ENCODE measurements at regions of chr10 and their contacts with region 1.

Region 1: DNA sequence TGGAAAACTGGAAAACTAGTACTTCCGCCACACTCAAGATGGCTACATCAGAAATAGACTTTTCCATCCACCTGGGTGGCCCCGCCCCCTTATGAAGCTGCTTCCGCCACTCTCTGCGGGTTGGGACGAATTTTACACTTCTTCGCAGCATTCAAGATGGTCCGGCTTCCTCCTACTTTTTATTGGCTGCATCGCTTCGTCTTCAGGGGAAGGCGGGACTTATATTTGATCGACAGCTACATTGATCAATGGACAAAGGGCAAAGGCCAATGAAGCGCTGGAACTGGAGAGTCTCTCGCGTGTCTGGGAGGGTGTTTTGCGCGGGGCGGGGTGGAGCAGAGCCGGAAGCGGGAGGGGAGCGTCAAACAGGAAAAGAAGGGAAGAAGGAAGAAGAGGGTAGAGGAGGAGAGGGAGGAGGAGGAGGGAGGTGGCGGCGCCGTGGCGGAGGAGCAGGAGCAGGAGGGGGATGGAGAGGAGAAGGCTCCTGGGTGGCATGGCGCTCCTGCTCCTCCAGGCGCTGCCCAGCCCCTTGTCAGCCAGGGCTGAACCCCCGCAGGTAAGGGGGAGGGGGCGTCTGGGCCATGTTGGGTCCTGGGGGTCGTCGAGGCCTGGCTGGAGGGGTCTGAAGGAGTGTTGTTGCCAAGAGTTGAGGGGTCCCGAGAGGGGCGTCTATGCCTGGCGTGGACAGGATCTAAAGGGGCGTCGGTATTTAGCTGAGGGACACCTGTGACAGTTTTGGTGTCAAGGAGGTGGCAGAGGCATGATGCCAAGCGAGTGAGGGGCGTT is at the start of gene WBP1L:
- DNase-seq: peak; percentile 88 to 99 (median 94)
- ATAC-seq: peak; percentile 97
- H3K4me3 ChIP-seq: peak within 1 kb of the TSS; percentile 99
- H3K4me3 Mint-ChIP-seq: peak within 1 kb of the TSS; percentile 94
- H3K27ac ChIP-seq: peak within 1 kb of the TSS; percentile 73 to 78
- H3K27ac Mint-ChIP-seq: peak within 1 kb of the TSS; percentile 86
- H3K4me1 ChIP-seq: peaks cover 27% of the 10 kb centered on the region
- H3K4me1 Mint-ChIP-seq: peaks cover 51% of the 10 kb centered on the region
- H3K27me3 ChIP-seq: no peaks in the 10 kb centered on the region
- H3K27me3 Mint-ChIP-seq: no peaks in the 10 kb centered on the region
- CTCF ChIP-seq: no peak
- total RNA-seq, gene WBP1L: 6.1 to 6.5 TPM

Region 2: GRCh38 chr10:101818119-101818871 is 925.5 kb before region 1 on chr10 and contains the start of gene OGA:
- CTCF ChIA-PET with region 1: no interaction called
- POLR2A ChIA-PET with region 1: no interaction called
- intact Hi-C with region 1: loop called in 1 of 2 experiments (anchors 10 kb)
- DNase-seq: peak; percentile 92 to 100 (median 98)
- ATAC-seq: peak; percentile 87
- H3K4me3 ChIP-seq: peak within 1 kb of the TSS; percentile 97
- H3K4me3 Mint-ChIP-seq: peak within 1 kb of the TSS; percentile 99
- H3K27ac ChIP-seq: peak within 1 kb of the TSS; percentile 82 to 87
- H3K27ac Mint-ChIP-seq: peak within 1 kb of the TSS; percentile 96
- H3K4me1 ChIP-seq: peaks cover 29% of the 10 kb centered on the region
- H3K4me1 Mint-ChIP-seq: peaks cover 48% of the 10 kb centered on the region
- H3K27me3 ChIP-seq: no peaks in the 10 kb centered on the region
- H3K27me3 Mint-ChIP-seq: no peaks in the 10 kb centered on the region
- CTCF ChIP-seq: no peak
- total RNA-seq, gene OGA: 395 to 416 TPM

Region 3: DNA sequence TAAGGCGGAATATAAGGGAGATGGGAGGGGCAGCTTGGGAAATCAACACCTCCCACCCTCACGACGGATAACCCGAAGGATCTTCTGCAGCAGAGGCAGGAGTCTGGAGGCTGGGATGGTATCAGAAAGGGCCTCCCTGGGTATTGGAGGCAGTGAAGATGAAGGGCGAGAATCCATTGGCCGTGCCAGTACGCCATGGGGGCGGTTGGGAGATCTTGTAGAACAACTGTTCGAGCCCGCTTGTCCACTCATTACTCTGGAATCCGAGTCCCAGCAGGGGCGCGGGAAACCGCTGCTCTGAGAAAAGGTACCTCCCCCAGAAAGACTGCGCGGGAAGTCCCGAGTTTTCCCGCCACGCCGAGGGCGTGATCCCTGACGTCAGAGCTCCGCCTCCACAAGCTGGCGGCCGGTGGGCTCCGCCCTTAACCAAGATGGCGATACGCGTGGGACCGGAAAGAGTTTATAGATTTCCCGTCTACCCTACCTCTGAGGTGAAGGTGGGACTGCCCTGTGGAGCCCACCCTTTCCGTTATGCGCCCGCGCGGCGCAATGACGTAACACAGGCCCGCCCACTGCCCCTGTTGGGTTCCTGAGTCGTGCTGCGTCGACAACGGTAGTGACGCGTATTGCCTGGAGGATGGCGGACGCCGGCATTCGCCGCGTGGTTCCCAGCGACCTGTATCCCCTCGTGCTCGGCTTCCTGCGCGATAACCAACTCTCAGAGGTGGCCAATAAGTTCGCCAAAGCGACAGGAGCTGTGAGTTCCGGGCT is 591.8 kb before region 1 on chr10 and contains the start of gene NOLC1:
- CTCF ChIA-PET with region 1: no interaction called
- POLR2A ChIA-PET with region 1: interaction called, 3 read pairs
- intact Hi-C with region 1: loop called in 1 of 2 experiments (anchors 2 kb)
- DNase-seq: peak; percentile 98 to 100 (median 100)
- ATAC-seq: peak; percentile 93
- H3K4me3 ChIP-seq: peak within 1 kb of the TSS; percentile 80
- H3K4me3 Mint-ChIP-seq: peak within 1 kb of the TSS; percentile 91
- H3K27ac ChIP-seq: peak within 1 kb of the TSS; percentile 89 to 93
- H3K27ac Mint-ChIP-seq: peak within 1 kb of the TSS; percentile 90
- H3K4me1 ChIP-seq: peaks cover 42% of the 10 kb centered on the region
- H3K4me1 Mint-ChIP-seq: peaks cover 50% of the 10 kb centered on the region
- H3K27me3 ChIP-seq: no peaks in the 10 kb centered on the region
- H3K27me3 Mint-ChIP-seq: no peaks in the 10 kb centered on the region
- CTCF ChIP-seq: no peak
- total RNA-seq, gene NOLC1: 34.2 to 36.1 TPM

Region 4: DNA sequence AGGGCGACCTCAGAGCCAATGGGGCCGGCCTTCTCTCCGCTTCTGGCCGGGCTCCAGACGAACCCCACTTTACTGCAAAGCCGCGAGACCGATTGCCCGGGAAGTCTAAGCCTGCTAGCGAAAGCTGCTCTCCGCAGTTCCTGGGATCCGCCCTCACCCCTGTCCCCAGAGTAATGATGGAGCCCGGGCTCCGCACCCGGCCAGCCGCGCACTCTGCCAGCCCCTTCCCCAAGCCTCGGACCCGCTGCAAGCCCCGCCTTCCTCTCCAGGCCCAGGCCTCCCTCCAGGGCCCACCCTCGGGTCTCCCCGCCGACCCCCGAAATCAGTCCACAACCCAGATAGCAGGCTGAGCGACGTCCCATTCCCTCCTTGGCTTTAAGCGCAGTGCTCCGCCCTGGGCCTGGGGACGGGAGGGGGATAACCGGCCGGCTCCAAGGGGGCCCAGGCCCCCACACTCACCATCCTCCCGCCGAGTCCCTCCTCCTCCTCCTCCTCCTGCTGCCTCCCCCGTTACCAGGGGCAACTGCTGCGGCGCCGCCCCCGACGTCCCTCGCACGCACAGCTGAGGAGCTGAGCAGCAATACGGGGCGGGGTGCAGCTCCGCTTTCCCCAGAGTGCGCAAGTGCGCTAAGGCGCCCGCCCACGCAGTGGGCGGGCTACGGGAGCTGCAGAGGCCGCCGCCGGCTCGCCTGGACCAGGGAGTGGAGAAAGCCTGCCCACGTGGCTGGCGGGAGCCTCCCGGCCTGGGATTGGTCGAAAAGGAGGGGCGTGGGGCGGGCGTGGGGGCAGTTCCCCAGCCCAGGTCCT is 29.8 kb before region 1 on chr10 and contains the start of gene ARL3:
- CTCF ChIA-PET with region 1: interaction called, 30 read pairs
- POLR2A ChIA-PET with region 1: interaction called, 28 read pairs
- intact Hi-C with region 1: loop called (anchors 1 kb)
- DNase-seq: peak; percentile 82 to 98 (median 92)
- ATAC-seq: peak; percentile 89
- H3K4me3 ChIP-seq: peak within 1 kb of the TSS; percentile 98
- H3K4me3 Mint-ChIP-seq: peak within 1 kb of the TSS; percentile 93
- H3K27ac ChIP-seq: peak within 1 kb of the TSS; percentile 84 to 86
- H3K27ac Mint-ChIP-seq: peak within 1 kb of the TSS; percentile 81
- H3K4me1 ChIP-seq: peaks cover 34% of the 10 kb centered on the region
- H3K4me1 Mint-ChIP-seq: peaks cover 61% of the 10 kb centered on the region
- H3K27me3 ChIP-seq: no peaks in the 10 kb centered on the region
- H3K27me3 Mint-ChIP-seq: no peaks in the 10 kb centered on the region
- CTCF ChIP-seq: peak; percentile 46
- total RNA-seq, gene ARL3: 0.99 to 1.3 TPM

Region 5: GRCh38 chr10:102796407-102797176 is 52.8 kb after region 1 on chr10:
- CTCF ChIA-PET with region 1: no interaction called
- POLR2A ChIA-PET with region 1: no interaction called
- intact Hi-C with region 1: no loop called
- DNase-seq: peak in 12 of 14 experiments; percentile 14 to 65 (median 42)
- ATAC-seq: peak; percentile 96
- H3K4me3 ChIP-seq: no peak overlapping the region
- H3K4me3 Mint-ChIP-seq: peak overlapping the region; percentile 13
- H3K27ac ChIP-seq: no peak overlapping the region
- H3K27ac Mint-ChIP-seq: peak overlapping the region; percentile 71
- H3K4me1 ChIP-seq: peaks cover 30% of the 10 kb centered on the region
- H3K4me1 Mint-ChIP-seq: peaks cover 46% of the 10 kb centered on the region
- H3K27me3 ChIP-seq: no peaks in the 10 kb centered on the region
- H3K27me3 Mint-ChIP-seq: no peaks in the 10 kb centered on the region
- CTCF ChIP-seq: no peak

Region 6: GRCh38 chr10:102917962-102918816 is 174.4 kb after region 1 on chr10 and contains the start of gene CNNM2:
- CTCF ChIA-PET with region 1: no interaction called
- POLR2A ChIA-PET with region 1: interaction called, 7 read pairs
- intact Hi-C with region 1: loop called (anchors 5 kb)
- DNase-seq: peak; percentile 98 to 100 (median 100)
- ATAC-seq: peak; percentile 88
- H3K4me3 ChIP-seq: peak within 1 kb of the TSS; percentile 92
- H3K4me3 Mint-ChIP-seq: peak within 1 kb of the TSS; percentile 98
- H3K27ac ChIP-seq: peak within 1 kb of the TSS; percentile 91
- H3K27ac Mint-ChIP-seq: peak within 1 kb of the TSS; percentile 90
- H3K4me1 ChIP-seq: peaks cover 34% of the 10 kb centered on the region
- H3K4me1 Mint-ChIP-seq: peaks cover 59% of the 10 kb centered on the region
- H3K27me3 ChIP-seq: peaks cover 3 to 8% of the 10 kb centered on the region in 2 experiments
- H3K27me3 Mint-ChIP-seq: peaks cover 22% of the 10 kb centered on the region
- CTCF ChIP-seq: no peak
- total RNA-seq, gene CNNM2: 8.4 to 8.9 TPM